ENCODE measurements at regions of chr17 and their contacts with region 1.

Region 1: GRCh38 chr17:7444682-7445618 is at the start of gene CHRNB1:
- DNase-seq: peak; percentile 90 to 92
- H3K4me3 ChIP-seq: peak within 1 kb of the TSS; percentile 9 to 45 (median 30)
- H3K27ac ChIP-seq: peak within 1 kb of the TSS in 2 of 3 donors; percentile 66 to 87
- H3K4me1 ChIP-seq: peaks cover 4 to 24% of the 10 kb centered on the region in 2 donors
- H3K27me3 ChIP-seq: no peaks in the 10 kb centered on the region
- CTCF ChIP-seq: peak in 3 of 6 experiments; percentile 8 to 20 (median 20)
- POLR2A ChIP-seq: peak in 1 of 2 donors; percentile 56
- total RNA-seq, gene CHRNB1: 13.4 to 29.2 (median 19.8) TPM

Region 2: DNA sequence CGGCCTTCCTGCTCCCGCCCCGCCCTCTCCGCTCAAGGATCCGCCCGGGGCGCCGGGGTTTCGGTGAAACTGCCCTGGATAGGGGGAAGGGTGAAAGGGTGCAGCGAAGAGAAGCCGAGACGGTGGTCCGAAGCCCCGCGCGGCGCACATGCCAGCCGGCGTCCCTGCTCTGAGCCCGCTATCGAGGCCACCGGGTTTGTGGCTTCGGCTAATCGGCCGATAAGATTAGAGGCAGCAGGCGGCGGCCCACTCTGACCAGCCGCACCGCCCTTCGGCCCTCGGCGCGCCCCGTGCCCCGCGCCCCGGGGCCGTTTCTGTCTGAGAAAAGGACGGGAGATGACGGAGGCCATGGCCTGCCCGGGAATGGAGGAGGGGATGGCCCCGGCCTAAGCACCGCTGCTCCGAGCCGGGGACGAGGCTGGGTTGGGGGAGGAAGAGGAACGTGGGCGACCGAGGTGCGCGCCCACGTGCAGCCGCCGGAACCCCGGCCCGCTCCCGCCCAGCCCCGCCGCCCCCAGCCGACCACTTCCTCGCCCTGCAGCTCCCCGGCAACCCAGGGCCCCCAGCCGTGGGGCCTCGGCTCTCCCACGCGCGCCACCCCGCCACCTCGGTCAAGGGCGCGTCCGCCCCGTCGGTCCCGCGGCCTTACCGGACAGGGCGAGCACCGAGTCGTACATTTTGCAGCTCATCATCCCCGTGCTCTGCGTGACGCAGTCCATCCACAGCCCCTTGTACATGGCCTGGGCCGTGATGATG is 183.6 kb before region 1 on chr17:
- intact Hi-C with region 1: no loop called
- DNase-seq: peak; percentile 24 to 90
- H3K4me3 ChIP-seq: peak overlapping the region; percentile 68 to 92 (median 78)
- H3K27ac ChIP-seq: peak overlapping the region; percentile 74 to 93 (median 84)
- H3K4me1 ChIP-seq: peaks cover 9 to 28% of the 10 kb centered on the region in 2 donors
- H3K27me3 ChIP-seq: no peaks in the 10 kb centered on the region
- CTCF ChIP-seq: no peak
- POLR2A ChIP-seq: peak; percentile 12 to 76

Region 3: DNA sequence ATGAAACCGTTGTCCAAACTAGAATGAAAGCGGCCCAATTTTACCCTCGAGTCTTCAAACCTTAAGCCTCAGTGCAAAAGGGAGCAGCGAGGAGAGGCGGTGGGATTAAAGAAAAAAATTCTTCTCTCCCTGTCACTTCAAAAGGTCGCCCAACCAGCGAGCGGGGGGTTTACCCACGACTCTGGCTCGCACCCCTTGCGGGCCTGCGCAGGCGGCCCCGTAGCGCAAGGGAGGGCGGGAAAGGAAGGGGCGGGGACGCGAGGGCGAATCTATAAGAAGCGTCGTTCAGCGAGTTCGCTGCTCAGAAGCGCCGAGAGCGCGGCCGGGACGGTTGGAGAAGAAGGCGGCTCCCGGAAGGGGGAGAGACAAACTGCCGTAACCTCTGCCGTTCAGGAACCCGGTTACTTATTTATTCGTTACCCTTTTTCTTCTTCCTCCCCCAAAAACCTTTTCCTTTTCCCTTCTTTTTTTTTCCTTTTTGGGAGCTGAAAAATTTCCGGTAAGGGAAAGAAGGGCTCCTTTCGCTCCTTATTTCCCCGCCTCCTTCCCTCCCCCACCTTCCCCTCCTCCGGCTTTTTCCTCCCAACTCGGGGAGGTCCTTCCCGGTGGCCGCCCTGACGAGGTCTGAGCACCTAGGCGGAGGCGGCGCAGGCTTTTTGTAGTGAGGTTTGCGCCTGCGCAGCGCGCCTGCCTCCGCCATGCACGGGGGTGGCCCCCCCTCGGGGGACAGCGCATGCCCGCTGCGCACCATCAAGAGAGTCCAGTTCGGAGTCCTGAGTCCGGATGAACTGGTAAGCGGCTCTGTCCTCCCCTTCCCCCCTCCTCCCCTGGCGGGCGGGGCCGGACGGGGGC is 39.3 kb after region 1 on chr17 and contains the start of gene POLR2A:
- intact Hi-C with region 1: loop called (anchors 5 kb)
- DNase-seq: peak; percentile 99
- H3K4me3 ChIP-seq: peak within 1 kb of the TSS; percentile 41 to 67 (median 47)
- H3K27ac ChIP-seq: peak within 1 kb of the TSS; percentile 91 to 99 (median 98)
- H3K4me1 ChIP-seq: peaks cover 42 to 67% of the 10 kb centered on the region in 2 donors
- H3K27me3 ChIP-seq: no peaks in the 10 kb centered on the region
- CTCF ChIP-seq: peak in 2 of 6 experiments; percentile 15 to 32
- POLR2A ChIP-seq: peak; percentile 99 to 100
- total RNA-seq, gene POLR2A: 47.6 to 125 (median 82.2) TPM

Region 4: GRCh38 chr17:7523033-7523432 is 78.1 kb after region 1 on chr17:
- intact Hi-C with region 1: no loop called
- DNase-seq: peak in 1 of 2 donors; percentile 14
- H3K4me3 ChIP-seq: no peak overlapping the region
- H3K27ac ChIP-seq: no peak overlapping the region
- H3K4me1 ChIP-seq: no peaks in the 10 kb centered on the region
- H3K27me3 ChIP-seq: no peaks in the 10 kb centered on the region
- CTCF ChIP-seq: peak in 4 of 6 experiments; percentile 4 to 42 (median 30)
- POLR2A ChIP-seq: no peak

Region 5: DNA sequence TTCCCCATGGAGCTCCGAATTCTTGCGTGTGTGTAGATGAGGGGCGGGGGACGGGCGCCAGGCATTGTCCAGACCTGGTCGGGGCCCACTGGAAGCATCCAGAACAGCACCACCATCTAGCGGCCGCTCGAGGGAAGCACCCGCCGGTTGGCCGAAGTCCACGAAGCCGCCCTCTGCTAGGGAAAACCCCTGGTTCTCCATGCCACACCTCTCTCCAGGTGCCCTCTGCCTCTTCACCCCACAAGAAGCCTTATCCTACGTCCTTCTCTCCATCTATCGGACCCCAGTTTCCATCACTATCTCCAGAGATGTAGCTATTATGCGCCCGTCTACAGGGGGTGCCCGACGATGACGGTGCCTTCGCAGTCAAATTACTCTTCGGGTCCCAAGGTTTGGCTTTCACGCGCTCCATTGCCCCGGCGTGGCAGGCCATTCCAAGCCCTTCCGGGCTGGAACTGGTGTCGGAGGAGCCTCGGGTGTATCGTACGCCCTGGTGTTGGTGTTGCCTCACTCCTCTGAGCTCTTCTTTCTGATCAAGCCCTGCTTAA is 116.2 kb after region 1 on chr17:
- intact Hi-C with region 1: no loop called
- DNase-seq: peak; percentile 96
- H3K4me3 ChIP-seq: peak overlapping the region; percentile 71 to 91 (median 90)
- H3K27ac ChIP-seq: peak overlapping the region; percentile 74 to 98 (median 79)
- H3K4me1 ChIP-seq: peaks cover 40 to 59% of the 10 kb centered on the region in 2 donors
- H3K27me3 ChIP-seq: no peaks in the 10 kb centered on the region
- CTCF ChIP-seq: peak; percentile 72 to 95 (median 83)
- POLR2A ChIP-seq: no peak

Region 6: DNA sequence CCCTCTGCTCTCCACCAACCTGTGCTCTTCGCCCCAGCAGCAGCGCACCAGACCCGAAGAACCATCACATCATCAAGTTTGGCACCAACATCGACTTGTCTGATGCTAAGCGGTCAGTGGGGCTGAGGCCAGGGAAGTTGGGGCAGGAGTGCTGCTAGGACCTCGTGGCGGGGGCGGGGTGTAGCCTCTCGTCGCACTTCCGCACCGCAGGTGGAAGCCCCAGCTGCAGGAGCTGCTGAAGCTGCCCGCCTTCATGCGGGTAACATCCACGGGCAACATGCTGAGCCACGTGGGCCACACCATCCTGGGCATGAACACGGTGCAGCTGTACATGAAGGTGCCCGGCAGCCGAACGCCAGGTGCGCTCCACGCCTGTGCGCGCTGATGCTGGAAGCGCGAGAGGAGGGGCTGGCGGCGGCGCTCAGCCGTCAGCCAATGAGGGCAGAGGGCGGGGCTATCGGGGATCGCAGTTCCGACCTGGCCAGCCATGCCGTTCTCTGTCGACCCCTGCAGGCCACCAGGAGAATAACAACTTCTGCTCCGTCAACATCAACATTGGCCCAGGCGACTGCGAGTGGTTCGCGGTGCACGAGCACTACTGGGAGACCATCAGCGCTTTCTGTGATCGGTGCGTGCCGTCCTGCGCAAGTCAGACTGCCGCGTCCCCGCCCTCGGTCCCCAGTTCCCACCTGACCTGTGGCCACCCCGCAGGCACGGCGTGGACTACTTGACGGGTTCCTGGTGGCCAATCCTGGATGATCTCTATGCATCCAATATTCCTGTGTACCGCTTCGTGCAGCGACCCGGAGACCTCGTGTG is 406.7 kb after region 1 on chr17:
- intact Hi-C with region 1: no loop called
- DNase-seq: peak; percentile 93 to 94
- H3K4me3 ChIP-seq: no peak overlapping the region
- H3K27ac ChIP-seq: no peak overlapping the region
- H3K4me1 ChIP-seq: peaks cover 9 to 26% of the 10 kb centered on the region in 2 donors
- H3K27me3 ChIP-seq: no peaks in the 10 kb centered on the region
- CTCF ChIP-seq: peak; percentile 98 to 100 (median 98)
- POLR2A ChIP-seq: peak in 1 of 2 donors; percentile 43